K562 (cell line): ENCODE measurements at regions of chr18 and their contacts with region 1.

Region 1: GRCh38 chr18:10560450-10561045 is 34.7 kb downstream of the NAPG start:
- DNase-seq: peak; percentile 73 to 85 (median 82)
- ATAC-seq: peak; percentile 89
- H3K4me3 ChIP-seq: no peak overlapping the region
- H3K27ac ChIP-seq: no peak overlapping the region
- H3K4me1 ChIP-seq: peaks cover 11 to 15% of the 10 kb centered on the region in 2 experiments
- H3K27me3 ChIP-seq: no peaks in the 10 kb centered on the region
- CTCF ChIP-seq: peak; percentile 79 to 87 (median 85)
- EP300 ChIP-seq: no peak
- POLR2A ChIP-seq: no peak
- RAD21 ChIP-seq: peak; percentile 90 to 95

Region 2: GRCh38 chr18:10304853-10305252 is 255.7 kb before region 1 on chr18:
- CTCF ChIA-PET with region 1: no interaction called
- POLR2A ChIA-PET with region 1: no interaction called
- in situ Hi-C with region 1: no loop called
- intact Hi-C with region 1: no loop called
- DNase-seq: no peak
- ATAC-seq: no peak
- H3K4me3 ChIP-seq: no peak overlapping the region
- H3K27ac ChIP-seq: no peak overlapping the region
- H3K4me1 ChIP-seq: no peaks in the 10 kb centered on the region
- H3K27me3 ChIP-seq: peaks cover 0 to under 1% of the 10 kb centered on the region in 2 experiments; a peak in 1 of 5 replicates
- CTCF ChIP-seq: no peak
- EP300 ChIP-seq: no peak
- POLR2A ChIP-seq: no peak
- RAD21 ChIP-seq: no peak

Region 3: DNA sequence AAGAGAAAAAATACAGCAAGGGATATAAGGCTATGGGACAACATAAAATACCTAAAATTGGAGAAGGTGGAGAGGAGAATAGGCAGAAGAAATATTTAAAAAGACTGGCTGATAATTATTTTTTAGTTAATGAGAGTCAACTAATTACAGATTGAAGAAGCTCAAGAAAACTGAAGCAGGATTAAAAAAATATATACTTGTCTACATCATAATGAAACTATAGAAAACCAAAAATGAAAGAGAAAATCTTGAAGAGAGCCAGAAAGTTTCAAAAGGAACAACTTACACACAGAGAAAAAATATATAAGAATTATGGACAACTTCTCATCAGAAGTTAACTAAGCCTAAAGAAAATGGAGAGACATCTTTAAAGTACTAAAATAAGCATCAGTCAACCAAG is 169.0 kb before region 1 on chr18:
- CTCF ChIA-PET with region 1: no interaction called
- POLR2A ChIA-PET with region 1: no interaction called
- in situ Hi-C with region 1: no loop called
- intact Hi-C with region 1: no loop called
- DNase-seq: no peak
- ATAC-seq: no peak
- H3K4me3 ChIP-seq: no peak overlapping the region
- H3K27ac ChIP-seq: no peak overlapping the region
- H3K4me1 ChIP-seq: no peaks in the 10 kb centered on the region
- H3K27me3 ChIP-seq: peaks cover 0 to 4% of the 10 kb centered on the region in 2 experiments; a peak in 2 of 5 replicates
- CTCF ChIP-seq: no peak
- EP300 ChIP-seq: no peak
- POLR2A ChIP-seq: no peak
- RAD21 ChIP-seq: no peak

Region 4: DNA sequence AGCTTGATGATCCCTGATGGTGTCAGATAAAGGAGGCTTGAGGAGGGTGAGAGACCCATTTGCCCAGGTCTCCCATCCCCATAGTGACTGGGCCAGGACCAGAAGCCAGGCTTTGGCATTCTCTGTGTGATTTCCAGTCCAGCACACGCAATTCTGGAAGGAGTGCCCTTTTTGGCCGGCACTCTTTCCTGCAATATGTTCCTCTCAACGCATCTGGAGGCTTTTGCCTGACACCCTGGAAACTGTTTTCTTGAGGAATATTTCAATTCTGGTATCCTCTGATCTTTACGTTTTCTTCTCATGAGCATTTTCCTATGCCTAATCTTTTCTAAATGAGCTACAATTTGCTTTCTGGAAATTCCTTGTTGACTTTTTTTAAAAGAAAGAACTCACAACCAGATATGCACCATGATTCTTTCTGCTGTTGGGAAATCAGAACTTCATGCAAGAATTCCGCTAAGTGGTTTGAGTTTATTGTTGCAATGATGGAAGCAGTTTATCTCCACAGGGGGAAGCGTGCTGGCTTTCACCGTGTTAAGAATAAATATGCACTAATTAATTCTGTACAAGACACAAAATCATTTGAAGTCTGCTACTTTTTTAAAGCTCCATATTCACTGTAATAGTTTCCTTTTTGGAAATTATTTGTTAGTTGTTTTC is 109.0 kb after region 1 on chr18:
- CTCF ChIA-PET with region 1: no interaction called
- POLR2A ChIA-PET with region 1: no interaction called
- in situ Hi-C with region 1: loop called (anchors 5 kb)
- intact Hi-C with region 1: no loop called
- DNase-seq: no peak
- ATAC-seq: no peak
- H3K4me3 ChIP-seq: no peak overlapping the region
- H3K27ac ChIP-seq: no peak overlapping the region
- H3K4me1 ChIP-seq: no peaks in the 10 kb centered on the region
- H3K27me3 ChIP-seq: peaks cover 39 to 48% of the 10 kb centered on the region in 2 experiments
- CTCF ChIP-seq: no peak
- EP300 ChIP-seq: no peak
- POLR2A ChIP-seq: no peak
- RAD21 ChIP-seq: no peak

Region 5: DNA sequence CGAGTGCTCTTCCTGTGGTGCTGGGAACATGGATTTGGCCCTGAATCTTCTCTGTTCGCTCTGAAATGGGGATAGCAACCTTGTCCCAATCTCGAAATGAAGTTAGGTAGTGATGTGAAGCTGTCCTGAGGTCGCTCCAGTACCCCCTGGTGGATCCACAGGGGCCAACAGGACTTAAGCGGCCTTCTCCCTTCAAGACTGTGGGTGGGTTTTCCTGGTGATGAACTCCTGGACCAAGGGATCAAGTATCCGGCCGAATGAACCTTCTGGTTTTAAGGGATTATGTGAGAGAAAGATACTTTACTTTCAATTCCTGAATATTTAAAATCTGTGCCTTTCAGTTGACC is 121.8 kb after region 1 on chr18:
- CTCF ChIA-PET with region 1: interaction called, 3 read pairs
- POLR2A ChIA-PET with region 1: no interaction called
- in situ Hi-C with region 1: no loop called
- intact Hi-C with region 1: loop called (anchors 2 kb)
- DNase-seq: peak in 2 of 4 experiments; percentile 28 to 53
- ATAC-seq: peak; percentile 91
- H3K4me3 ChIP-seq: no peak overlapping the region
- H3K27ac ChIP-seq: no peak overlapping the region
- H3K4me1 ChIP-seq: no peaks in the 10 kb centered on the region
- H3K27me3 ChIP-seq: peaks cover 37 to 41% of the 10 kb centered on the region in 2 experiments; a peak in 4 of 5 replicates
- CTCF ChIP-seq: peak; percentile 59 to 61 (median 60)
- EP300 ChIP-seq: no peak
- POLR2A ChIP-seq: no peak
- RAD21 ChIP-seq: peak; percentile 42 to 67

Region 6: DNA sequence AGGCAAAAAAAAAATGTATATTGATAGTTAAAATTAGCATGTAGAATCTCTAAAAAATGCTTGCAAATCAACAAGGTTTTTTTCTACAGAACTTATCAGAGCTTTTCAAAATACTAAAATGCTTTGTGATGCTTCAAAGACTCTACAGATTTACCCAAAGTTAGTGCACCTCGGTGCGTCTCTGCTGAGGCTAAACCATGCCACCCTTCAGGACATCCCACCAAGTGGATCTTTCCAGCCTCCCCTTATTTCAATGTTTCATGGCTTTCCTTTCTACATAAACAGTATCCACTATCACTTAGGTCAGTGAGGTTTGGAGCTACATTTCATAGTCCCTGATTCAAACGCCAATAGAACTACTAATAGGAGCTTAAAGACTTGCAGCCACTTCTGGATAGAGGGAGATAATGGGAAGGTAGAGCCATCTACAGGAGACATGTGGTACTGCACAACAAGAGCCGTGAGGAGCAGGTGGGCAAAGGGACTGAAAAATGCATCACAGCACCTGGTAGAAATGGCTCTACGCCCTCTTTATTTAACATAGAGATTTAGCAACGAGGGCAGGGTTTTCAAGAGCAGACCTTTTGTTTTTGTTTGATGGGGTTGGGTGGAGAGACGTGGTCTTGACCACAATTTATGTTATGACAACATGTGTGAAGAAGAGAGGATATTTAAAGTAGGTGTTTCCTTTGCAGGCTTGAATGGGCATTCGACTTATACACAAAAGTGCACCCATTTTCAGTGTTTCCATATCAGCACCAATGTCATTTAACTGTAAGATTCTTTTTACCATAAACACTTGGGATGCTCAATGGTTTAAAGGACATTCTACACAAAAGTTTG is 992.8 kb after region 1 on chr18:
- CTCF ChIA-PET with region 1: no interaction called
- POLR2A ChIA-PET with region 1: no interaction called
- in situ Hi-C with region 1: loop called (anchors 25 kb)
- intact Hi-C with region 1: no loop called
- DNase-seq: peak; percentile 57 to 66 (median 60)
- ATAC-seq: peak; percentile 88
- H3K4me3 ChIP-seq: no peak overlapping the region
- H3K27ac ChIP-seq: no peak overlapping the region
- H3K4me1 ChIP-seq: no peaks in the 10 kb centered on the region
- H3K27me3 ChIP-seq: no peaks in the 10 kb centered on the region; a peak in 1 of 5 replicates
- CTCF ChIP-seq: peak; percentile 61 to 83 (median 76)
- EP300 ChIP-seq: no peak
- POLR2A ChIP-seq: no peak
- RAD21 ChIP-seq: peak in 1 of 2 experiments; percentile 68; a peak in 2 of 4 replicates